ENCODE measurements at regions of chr1 and their contacts with region 1.

Region 1: DNA sequence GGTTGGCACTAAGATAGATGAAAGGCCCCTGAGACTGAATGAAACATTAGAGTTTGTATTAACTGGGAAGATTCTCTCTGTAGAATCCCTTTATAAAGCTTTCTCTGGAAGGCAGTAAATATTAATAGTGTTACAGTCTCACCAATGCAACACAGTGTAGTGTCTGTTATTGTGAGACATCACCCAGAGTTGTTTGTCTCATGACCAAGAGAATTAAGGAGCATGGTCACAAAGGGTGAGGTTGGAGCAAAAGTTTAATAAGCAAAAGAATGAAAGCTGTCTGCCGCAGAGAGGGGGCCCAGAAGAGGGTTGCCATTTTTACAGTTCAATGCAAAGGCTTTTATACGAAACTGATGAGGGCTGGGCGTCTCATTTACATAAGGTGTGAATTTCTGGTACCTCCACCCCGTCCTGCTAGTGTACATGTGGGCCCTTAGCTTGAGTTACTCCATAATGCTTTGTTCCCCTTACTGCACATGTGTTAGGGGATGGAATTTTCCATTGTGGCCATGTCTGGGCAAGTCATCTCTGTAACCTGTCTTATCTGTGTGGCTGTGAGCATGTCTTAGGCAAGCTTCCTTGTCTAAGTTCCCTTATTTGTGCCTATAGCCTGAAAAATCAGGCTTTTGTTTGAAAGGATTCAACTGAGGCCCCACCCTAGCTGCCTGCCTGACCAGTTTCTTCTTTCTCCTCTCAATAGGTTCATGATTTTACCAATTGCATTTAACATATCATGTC is 184.1 kb downstream of the RASAL2 start:
- DNase-seq: no peak
- H3K4me3 ChIP-seq: no peak overlapping the region
- H3K27ac ChIP-seq: no peak overlapping the region
- H3K4me1 ChIP-seq: no peaks in the 10 kb centered on the region
- CTCF ChIP-seq: no peak

Region 2: GRCh38 chr1:177928194-177928593 is 349.8 kb before region 1 on chr1:
- CTCF ChIA-PET with region 1: no interaction called
- POLR2A ChIA-PET with region 1: no interaction called
- intact Hi-C with region 1: no loop called
- DNase-seq: no peak
- H3K4me3 ChIP-seq: no peak overlapping the region
- H3K27ac ChIP-seq: no peak overlapping the region
- H3K4me1 ChIP-seq: no peaks in the 10 kb centered on the region
- CTCF ChIP-seq: peak; percentile 30; the same call in 1 of the 2 replicates

Region 3: DNA sequence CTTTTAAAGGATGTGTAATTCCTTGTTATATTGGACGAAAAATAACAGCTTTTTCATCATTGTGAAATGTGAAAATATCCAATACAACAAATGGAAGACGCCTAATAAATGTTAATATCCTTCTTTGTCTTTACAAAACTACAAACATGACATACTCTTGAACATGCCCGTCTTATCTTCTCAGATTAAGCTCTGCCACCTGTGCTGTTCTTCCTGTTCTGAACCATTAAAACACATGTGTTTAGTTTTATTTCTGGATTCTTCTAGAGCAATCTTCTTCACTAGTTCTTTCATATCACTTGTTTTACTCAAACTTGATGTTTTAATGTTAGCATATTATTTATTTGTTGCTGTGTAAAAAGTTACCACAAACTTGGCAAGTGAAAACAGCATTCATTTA is 71.8 kb after region 1 on chr1:
- CTCF ChIA-PET with region 1: no interaction called
- POLR2A ChIA-PET with region 1: interaction called, 6 read pairs
- intact Hi-C with region 1: loop called (anchors 2 kb)
- DNase-seq: no peak
- H3K4me3 ChIP-seq: no peak overlapping the region
- H3K27ac ChIP-seq: no peak overlapping the region
- H3K4me1 ChIP-seq: no peaks in the 10 kb centered on the region
- CTCF ChIP-seq: no peak